PC-3 (cell line): ENCODE measurements at regions of chr1 and their contacts with region 1.

Region 1: GRCh38 chr1:112818990-112819689 is 104.0 kb upstream of the PPM1J start:
- DNase-seq: peak; percentile 13
- ATAC-seq: peak; percentile 57
- H3K4me3 ChIP-seq: no peak overlapping the region
- H3K27ac ChIP-seq: no peak overlapping the region
- H3K4me1 ChIP-seq: peaks cover 5% of the 10 kb centered on the region; the same call in 1 of the 2 replicates
- H3K27me3 ChIP-seq: no peaks in the 10 kb centered on the region
- CTCF ChIP-seq: no peak

Region 2: DNA sequence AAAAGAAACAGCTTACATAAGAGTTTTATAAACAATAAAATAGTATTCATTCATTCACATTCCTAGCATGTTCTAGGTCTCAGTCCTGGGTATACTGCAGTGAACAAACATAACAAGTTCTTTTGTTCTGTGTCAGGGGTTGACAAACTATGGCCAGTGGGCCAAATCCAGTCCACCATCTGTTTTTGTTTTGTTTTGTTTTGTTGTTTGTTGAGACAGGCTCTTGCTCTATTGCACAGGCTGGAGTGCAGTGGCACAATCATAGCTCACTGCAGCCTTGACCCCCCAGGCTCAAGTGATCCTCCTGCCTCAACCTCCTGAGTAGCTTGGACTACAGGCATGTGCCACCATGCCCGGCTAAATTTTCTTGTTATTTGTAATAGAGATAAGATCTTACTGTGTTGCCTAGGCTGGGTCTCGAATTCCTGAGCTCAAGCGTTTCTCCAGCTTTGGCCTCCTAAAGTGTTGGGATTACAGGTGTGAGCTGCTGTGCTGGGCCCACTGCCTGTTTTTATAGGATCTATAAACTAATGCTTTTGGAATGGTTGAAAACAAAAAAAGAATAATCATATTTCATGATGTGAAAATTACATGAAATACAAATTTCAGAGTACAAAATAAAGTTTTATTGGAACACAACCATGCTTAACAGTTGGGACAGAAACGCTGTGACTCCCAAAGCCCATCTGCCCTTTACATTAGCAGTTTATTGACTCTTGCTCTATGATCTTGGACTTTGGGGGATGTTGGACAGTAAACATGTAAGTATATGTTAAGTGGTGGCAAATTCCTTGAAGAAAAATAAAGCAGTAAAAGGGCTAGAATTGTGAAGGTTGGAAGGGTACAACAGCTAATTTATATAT is 181.7 kb before region 1 on chr1:
- CTCF ChIA-PET with region 1: no interaction called
- POLR2A ChIA-PET with region 1: no interaction called
- intact Hi-C with region 1: no loop called
- DNase-seq: peak; percentile 26
- ATAC-seq: peak; percentile 78
- H3K4me3 ChIP-seq: no peak overlapping the region
- H3K27ac ChIP-seq: peak overlapping the region; percentile 50
- H3K4me1 ChIP-seq: peaks cover 28% of the 10 kb centered on the region
- H3K27me3 ChIP-seq: no peaks in the 10 kb centered on the region
- CTCF ChIP-seq: no peak

Region 3: DNA sequence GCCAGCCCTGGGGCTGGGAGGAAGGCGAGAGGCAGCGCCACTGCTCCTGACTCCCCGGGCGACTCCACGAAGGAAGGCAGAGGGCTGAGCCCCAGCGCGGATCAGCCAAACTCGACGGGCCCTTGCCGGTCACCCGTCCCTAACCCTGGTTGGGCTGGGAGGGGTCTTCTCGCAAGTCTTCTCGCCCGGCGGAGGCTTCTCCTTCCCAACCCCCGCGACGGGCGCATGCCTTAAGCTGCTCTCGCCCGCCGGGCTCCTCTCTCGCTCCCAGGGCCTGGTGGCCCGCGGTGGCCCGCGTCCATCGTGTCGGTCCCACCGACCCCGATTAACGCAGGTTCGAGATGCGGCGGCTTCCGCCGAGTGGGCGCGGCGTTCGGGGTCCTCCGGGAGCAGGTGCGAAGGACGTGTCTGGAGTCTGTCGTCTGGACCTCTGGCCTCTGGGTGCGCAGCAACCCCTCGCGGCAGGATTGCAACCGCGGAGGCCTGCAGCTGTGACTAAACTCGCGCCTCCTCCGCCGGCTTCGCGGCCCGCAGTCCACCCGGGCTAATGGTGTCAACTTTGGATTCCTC is 75.0 kb before region 1 on chr1:
- CTCF ChIA-PET with region 1: no interaction called
- POLR2A ChIA-PET with region 1: no interaction called
- intact Hi-C with region 1: no loop called
- DNase-seq: no peak
- ATAC-seq: no peak
- H3K4me3 ChIP-seq: no peak overlapping the region
- H3K27ac ChIP-seq: no peak overlapping the region
- H3K4me1 ChIP-seq: no peaks in the 10 kb centered on the region
- H3K27me3 ChIP-seq: no peaks in the 10 kb centered on the region
- CTCF ChIP-seq: no peak

Region 4: GRCh38 chr1:112935461-112936289 is 116.5 kb after region 1 on chr1:
- CTCF ChIA-PET with region 1: no interaction called
- POLR2A ChIA-PET with region 1: interaction called, 11 read pairs
- intact Hi-C with region 1: no loop called
- DNase-seq: peak; percentile 51
- ATAC-seq: peak; percentile 59
- H3K4me3 ChIP-seq: no peak overlapping the region
- H3K27ac ChIP-seq: peak overlapping the region; percentile 19
- H3K4me1 ChIP-seq: peaks cover 29% of the 10 kb centered on the region
- H3K27me3 ChIP-seq: no peaks in the 10 kb centered on the region
- CTCF ChIP-seq: no peak

Region 5: GRCh38 chr1:113146242-113147072 is 327.3 kb after region 1 on chr1:
- CTCF ChIA-PET with region 1: no interaction called
- POLR2A ChIA-PET with region 1: no interaction called
- intact Hi-C with region 1: no loop called
- DNase-seq: no peak
- ATAC-seq: peak; percentile 24; the same call in 1 of the 2 replicates
- H3K4me3 ChIP-seq: no peak overlapping the region
- H3K27ac ChIP-seq: no peak overlapping the region
- H3K4me1 ChIP-seq: peaks cover 13% of the 10 kb centered on the region
- H3K27me3 ChIP-seq: no peaks in the 10 kb centered on the region
- CTCF ChIP-seq: no peak